Left cardiac atrium (tissue), 4 donors: ENCODE measurements at regions of chr14 and their contacts with region 1.

Region 1: DNA sequence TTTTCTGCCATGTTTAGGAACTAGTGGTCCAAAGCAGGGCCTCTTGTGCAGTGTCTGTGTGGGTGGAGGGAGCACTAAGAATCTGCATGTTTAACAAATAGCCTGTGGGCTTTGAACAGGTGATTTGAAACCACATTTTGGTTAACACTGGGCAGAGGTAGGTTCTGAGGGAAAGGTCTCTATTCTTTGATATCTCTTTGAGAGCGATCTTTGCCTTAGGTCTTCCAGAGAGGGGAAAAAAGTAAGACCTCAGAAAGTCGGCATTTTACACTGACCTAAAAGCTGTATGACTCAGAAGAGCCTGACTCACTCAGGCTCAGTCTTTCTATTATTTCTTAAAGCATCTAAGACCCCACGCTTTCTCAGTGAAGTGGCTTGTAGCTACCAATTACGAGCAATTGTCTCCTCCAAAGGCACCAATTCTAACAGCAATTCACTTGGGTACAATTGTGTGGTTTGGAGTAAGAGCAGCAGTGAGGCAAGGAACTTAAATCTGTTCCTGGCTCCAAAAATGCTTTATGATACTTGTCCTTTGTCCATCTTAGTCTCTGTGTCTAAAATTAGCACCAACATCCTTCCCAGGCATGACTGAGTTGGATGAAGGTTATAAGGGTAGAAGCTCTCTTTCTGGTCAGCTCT is 8.8 kb downstream of the EIF2B2 start:
- DNase-seq: no peak
- ATAC-seq: peak; percentile 58 to 74

Region 2: GRCh38 chr14:75063407-75064213 is 52.1 kb after region 1 on chr14 and contains the start of gene ACYP1:
- intact Hi-C with region 1: loop called in 1 of 2 experiments (anchors 10 kb)
- DNase-seq: peak; percentile 91
- ATAC-seq: peak; percentile 97 to 98
- total RNA-seq, gene ACYP1: 7.4 to 13.5 TPM

Region 3: DNA sequence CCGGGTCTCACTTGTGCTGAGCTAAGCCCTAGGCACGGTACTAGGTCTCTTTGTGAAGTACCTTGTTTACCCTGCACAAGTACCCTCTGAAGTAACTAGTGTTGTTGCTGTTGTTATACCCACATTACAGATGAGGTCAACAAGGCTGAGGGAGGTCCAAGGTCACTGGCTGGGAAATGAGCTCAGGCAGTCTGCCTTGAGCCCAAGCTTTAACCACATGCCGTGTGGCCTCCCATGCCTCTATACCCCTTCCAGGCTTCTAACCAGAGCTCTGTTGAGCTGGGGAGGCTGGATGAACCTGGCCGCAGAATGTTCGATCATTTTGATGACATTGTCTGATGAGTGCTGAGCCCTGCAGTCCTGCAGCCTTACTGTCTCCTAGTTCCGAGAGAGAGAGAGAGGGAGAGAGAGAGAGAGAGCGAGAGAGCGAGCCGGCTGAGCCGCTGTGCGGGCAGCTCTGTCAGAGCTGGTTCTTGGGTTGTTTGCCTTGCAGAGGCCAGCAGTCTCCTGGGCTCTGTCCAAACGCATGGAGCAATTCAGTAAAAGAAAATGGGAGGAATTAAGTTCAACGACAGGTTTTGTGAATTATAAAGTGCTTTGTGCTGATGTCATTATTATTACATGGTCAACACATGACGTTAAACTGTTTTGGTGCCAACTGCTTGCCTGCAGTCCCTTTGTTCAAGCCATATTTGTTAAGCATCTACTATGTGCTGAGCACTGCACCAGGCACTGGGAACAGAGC is 429.4 kb after region 1 on chr14:
- intact Hi-C with region 1: no loop called
- DNase-seq: peak; percentile 77
- ATAC-seq: peak; percentile 78 to 87